PC-9 (cell line): ENCODE measurements at regions of chr4 and their contacts with region 1.

Region 1: DNA sequence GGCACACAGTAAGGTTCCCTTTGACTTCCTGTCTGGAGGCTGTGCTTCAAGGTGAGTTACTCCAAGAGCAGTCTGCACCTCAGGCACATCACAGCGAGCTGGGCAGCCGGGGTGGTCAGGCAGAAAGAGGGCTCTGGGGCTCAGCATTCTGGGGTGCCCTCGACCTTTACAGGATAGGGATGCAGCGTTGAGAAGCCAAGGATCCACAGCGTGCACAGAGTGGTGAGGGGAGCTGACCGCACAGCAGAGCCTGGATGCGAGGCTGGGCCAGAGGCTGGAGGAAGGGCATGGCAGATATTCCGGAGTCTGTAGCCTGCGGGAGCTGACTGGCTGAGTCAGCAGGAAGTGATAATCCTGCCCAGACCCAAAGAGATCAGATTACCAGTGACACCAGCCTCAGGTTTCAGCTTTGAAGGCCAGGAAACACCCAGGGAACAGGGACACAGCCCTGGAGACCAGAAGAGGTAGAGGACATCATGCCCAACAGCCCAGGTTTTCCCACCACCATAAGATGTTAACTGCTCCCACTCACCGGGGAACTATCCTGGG is 38.4 kb upstream of the PDLIM3 start:
- DNase-seq: peak; percentile 77 to 84
- H3K4me3 ChIP-seq: peak overlapping the region; percentile 34; the same call in 1 of the 2 replicates
- H3K27ac ChIP-seq: peak overlapping the region; percentile 52
- H3K4me1 ChIP-seq: peaks cover 19% of the 10 kb centered on the region
- H3K27me3 ChIP-seq: no peaks in the 10 kb centered on the region
- CTCF ChIP-seq: no peak

Region 2: DNA sequence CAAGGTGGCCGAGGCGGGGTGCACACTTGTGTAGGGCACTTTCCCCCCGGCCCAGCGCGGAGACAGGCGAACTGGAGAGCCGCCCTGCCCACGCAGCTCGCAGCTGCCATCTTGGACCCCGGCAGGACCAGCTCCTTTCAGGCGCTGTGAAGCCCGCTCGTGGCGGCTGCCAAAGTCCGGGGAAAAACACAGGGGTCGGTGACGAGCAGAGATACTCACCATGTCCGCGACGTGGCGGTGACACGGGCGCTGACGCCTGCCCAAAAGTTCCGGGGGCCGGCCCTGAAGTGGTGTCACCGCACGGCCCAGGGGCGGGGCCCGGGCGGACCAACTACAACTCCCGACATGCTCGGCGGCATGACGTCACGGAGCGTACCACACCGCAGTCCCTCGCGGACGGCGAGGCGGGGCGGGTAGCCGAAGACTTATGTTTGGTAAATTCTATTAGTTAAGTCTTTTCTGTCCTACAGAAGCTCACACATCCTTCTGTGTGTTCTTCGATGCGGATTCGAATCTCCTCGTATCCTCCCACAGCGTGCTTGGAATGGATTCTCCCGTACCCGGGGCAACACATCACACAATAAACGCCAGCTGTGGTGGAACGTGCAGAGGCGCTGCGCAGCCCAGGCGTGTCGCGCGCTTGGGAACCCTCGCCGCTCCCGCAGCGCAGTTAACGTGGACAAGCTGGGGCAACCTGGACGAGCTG is 147.9 kb before region 1 on chr4 and contains the start of gene UFSP2:
- CTCF ChIA-PET with region 1: no interaction called
- POLR2A ChIA-PET with region 1: interaction called, 12 read pairs
- intact Hi-C with region 1: no loop called
- DNase-seq: peak; percentile 59 to 81
- H3K4me3 ChIP-seq: peak within 1 kb of the TSS; percentile 82
- H3K27ac ChIP-seq: peak within 1 kb of the TSS; percentile 77
- H3K4me1 ChIP-seq: peaks cover 10% of the 10 kb centered on the region
- H3K27me3 ChIP-seq: no peaks in the 10 kb centered on the region
- CTCF ChIP-seq: no peak
- total RNA-seq, gene UFSP2: 22.7 and 26.8 TPM in 2 replicates

Region 3: DNA sequence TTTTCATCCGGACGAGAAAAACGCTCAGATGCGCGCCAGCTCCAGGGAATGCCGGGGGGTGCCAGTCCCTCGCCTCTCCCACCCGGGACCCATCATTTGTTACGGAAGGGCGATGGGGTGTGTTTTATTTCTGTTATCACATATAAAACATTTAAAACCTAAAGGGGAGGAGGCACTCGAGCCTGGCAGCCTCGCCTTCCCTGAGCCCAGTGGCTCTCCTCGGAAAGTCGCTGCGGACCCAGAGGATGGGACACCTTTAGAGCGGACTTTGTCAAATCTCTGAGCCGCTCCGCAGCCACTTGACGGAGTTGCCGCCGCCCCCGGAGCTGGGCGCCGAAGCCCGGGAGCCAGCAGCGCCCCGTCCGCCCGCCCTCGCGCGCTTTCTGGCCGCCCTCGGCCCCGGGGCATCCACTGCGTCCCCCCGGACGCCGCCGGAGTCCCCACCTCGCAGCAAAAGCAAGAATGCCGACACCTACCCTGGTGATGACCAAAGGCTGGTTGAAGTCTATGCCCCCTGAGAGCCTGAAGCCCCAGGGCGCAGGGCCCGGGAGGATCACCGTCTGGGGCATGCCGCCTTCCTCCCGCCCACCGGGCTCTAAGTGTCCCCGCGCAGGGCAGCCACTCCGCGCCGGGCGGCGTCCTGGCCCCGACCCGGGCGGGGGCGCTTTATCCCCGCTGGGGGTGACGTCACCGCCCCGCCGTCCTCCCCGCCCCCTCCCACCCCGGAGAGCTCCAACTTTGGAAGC is 38.7 kb before region 1 on chr4 and contains the start of gene PDLIM3:
- CTCF ChIA-PET with region 1: no interaction called
- POLR2A ChIA-PET with region 1: interaction called, 7 read pairs
- intact Hi-C with region 1: loop called (anchors 1 kb)
- DNase-seq: peak in 1 of 2 experiments; percentile 62
- H3K4me3 ChIP-seq: peak within 1 kb of the TSS; percentile 73
- H3K27ac ChIP-seq: no peak within 1 kb of the TSS
- H3K4me1 ChIP-seq: no peaks in the 10 kb centered on the region
- H3K27me3 ChIP-seq: no peaks in the 10 kb centered on the region
- CTCF ChIP-seq: no peak
- total RNA-seq, gene PDLIM3: 3.3 and 5.6 TPM in 2 replicates